ENCODE measurements at regions of chr2 and their contacts with region 1.

Region 1: GRCh38 chr2:226984750-226985582 is 149.1 kb downstream of the RHBDD1 start:
- DNase-seq: peak; percentile 53
- CTCF ChIP-seq: peak; percentile 28

Region 2: DNA sequence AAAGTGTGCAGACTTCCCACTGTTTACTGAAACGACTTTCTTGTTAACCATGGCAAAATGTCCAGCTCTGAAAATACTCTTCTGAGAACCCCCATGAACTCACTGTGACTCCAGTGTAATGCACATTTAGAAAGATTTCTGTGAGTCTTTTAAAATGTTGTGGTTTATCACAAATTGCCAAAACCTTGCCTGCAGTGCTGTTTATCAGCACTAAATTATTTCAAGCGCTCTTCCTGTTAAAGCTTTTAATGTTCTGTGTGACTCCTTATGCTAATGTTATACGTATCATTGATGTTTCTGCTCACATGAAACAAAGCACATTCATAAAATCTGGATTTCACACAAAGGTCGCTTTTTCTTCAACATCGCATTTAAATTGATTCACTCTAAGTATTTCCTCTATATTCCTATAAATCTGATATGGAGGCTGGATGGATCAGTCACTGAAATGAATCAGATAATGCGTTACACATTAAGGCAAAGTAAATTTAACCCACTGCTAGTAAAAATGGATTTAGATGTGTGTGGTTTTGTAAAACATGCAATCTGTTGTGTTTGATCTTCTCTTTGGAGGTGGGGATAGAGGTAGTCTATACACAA is 1064.2 kb before region 1 on chr2:
- in situ Hi-C with region 1: loop called (anchors 25 kb)
- DNase-seq: no peak
- CTCF ChIP-seq: no peak

Region 3: GRCh38 chr2:226813148-226813701 is 171.7 kb before region 1 on chr2:
- in situ Hi-C with region 1: loop called (anchors 10 kb)
- DNase-seq: peak; percentile 22
- CTCF ChIP-seq: peak; percentile 47

Region 4: GRCh38 chr2:227406177-227407031 is 421.4 kb after region 1 on chr2:
- in situ Hi-C with region 1: no loop called
- DNase-seq: peak; percentile 59
- CTCF ChIP-seq: peak; percentile 72

Measured in GM13976 (cell line).